HCT116 (cell line): ENCODE measurements at regions of chr15 and their contacts with region 1.

Region 1: GRCh38 chr15:51380999-51381795 is 39.7 kb downstream of the GLDN start:
- DNase-seq: peak; percentile 61
- ATAC-seq: peak; percentile 97
- H3K4me3 ChIP-seq: no peak overlapping the region
- H3K27ac ChIP-seq: no peak overlapping the region
- H3K4me1 ChIP-seq: no peaks in the 10 kb centered on the region
- H3K27me3 ChIP-seq: no peaks in the 10 kb centered on the region
- CTCF ChIP-seq: peak; percentile 89 to 98 (median 98)
- POLR2A ChIP-seq: no peak
- RAD21 ChIP-seq: peak; percentile 97

Region 2: GRCh38 chr15:51132384-51133139 is 248.6 kb before region 1 on chr15:
- CTCF ChIA-PET with region 1: interaction called, 8 read pairs
- POLR2A ChIA-PET with region 1: no interaction called
- RAD21 ChIA-PET with region 1: no interaction called
- intact Hi-C with region 1: loop called (anchors 1 kb)
- DNase-seq: peak; percentile 15
- ATAC-seq: peak; percentile 91
- H3K4me3 ChIP-seq: no peak overlapping the region
- H3K27ac ChIP-seq: no peak overlapping the region
- H3K4me1 ChIP-seq: peaks cover 0 to 11% of the 10 kb centered on the region in 2 experiments; a peak in 2 of 4 replicates
- H3K27me3 ChIP-seq: no peaks in the 10 kb centered on the region
- CTCF ChIP-seq: peak; percentile 43 to 98 (median 94); a peak in 5 of 6 replicates
- POLR2A ChIP-seq: no peak
- RAD21 ChIP-seq: peak; percentile 51; the same call in 1 of the 2 replicates

Region 3: GRCh38 chr15:51192521-51193280 is 188.5 kb before region 1 on chr15:
- CTCF ChIA-PET with region 1: interaction called, 10 read pairs
- POLR2A ChIA-PET with region 1: no interaction called
- RAD21 ChIA-PET with region 1: no interaction called
- intact Hi-C with region 1: no loop called
- DNase-seq: peak; percentile 61
- ATAC-seq: peak; percentile 99
- H3K4me3 ChIP-seq: no peak overlapping the region
- H3K27ac ChIP-seq: no peak overlapping the region
- H3K4me1 ChIP-seq: peaks cover 0 to 4% of the 10 kb centered on the region in 2 experiments; a peak in 3 of 4 replicates
- H3K27me3 ChIP-seq: no peaks in the 10 kb centered on the region; the same call in 1 of the 2 replicates
- CTCF ChIP-seq: peak; percentile 66 to 97 (median 96); a peak in 5 of 6 replicates
- POLR2A ChIP-seq: no peak
- RAD21 ChIP-seq: peak; percentile 73

Region 4: DNA sequence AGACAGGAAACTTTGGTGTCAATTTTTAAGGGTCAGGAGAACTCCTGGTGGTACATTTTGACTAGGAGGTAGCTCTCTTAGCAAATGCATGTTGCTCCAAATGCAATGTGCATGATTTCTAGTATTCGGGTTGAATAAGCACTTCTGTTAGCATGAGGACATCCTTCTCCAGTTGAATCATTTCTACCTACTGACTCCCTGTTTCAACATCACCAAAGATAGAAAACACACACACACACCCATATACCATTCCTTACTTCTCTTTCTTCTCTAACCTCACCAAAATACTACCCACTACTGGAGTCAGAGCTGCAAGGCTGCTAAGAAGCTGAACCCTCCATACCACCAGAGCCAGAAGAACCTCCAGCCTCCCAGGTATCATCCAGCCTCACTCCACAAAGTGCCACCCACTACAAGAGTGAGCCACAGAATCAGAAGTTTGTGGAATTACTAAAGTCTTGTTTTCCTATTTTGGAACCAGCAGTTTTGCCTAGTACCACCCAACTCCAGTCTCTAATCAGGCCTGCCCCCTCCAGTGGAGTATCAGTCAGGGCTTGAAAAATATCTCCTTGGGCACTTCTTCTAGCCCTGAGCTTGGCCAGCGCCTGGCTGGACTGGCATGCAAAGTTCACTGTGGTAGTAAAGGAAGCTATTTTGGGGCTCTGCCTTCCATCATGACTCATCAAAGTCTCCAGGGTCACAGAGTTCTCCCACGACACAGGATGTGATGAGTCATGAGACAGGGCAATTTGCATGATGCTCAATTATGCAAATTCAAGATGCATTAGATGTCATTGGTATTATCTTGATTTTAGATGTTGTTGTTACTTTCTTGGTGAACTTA is 153.0 kb before region 1 on chr15:
- CTCF ChIA-PET with region 1: interaction called, 14 read pairs
- POLR2A ChIA-PET with region 1: no interaction called
- RAD21 ChIA-PET with region 1: no interaction called
- intact Hi-C with region 1: loop called (anchors 5 kb)
- DNase-seq: peak; percentile 54
- ATAC-seq: peak; percentile 80
- H3K4me3 ChIP-seq: peak overlapping the region in 1 of 2 experiments; percentile 44; a peak in 2 of 4 replicates
- H3K27ac ChIP-seq: peak overlapping the region; percentile 54; the same call in 1 of the 2 replicates
- H3K4me1 ChIP-seq: peaks cover 20 to 40% of the 10 kb centered on the region in 2 experiments
- H3K27me3 ChIP-seq: no peaks in the 10 kb centered on the region
- CTCF ChIP-seq: no peak
- POLR2A ChIP-seq: no peak
- RAD21 ChIP-seq: no peak

Region 5: DNA sequence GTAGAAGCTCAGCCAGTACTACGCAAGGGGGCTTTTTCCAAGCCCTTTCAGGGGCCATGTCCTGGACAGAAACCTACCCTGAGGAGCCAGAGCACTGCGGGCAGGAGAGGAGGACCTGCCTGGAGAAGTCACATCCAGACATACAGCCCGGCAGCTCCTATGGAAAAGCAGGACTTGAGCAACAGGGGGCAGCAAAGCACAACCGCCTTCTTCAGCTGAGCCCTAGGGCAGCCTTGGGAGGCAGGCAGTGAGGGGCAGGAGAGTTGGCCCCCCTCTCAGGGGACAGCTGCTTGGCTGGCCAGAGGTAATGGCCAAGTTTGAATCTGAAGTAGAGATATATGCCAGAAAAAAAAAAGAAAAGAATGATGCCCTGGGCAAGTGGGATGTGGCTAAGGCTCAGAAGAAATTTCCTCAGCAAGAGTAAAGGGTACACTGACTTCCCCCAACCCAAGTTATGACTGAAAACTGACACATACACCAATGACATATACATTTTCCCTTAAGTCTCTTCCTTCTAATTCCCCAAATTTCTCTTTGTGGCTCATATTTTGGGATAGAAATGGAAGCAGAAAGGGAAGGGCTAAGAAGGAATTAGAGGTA is 99.7 kb before region 1 on chr15:
- CTCF ChIA-PET with region 1: interaction called, 3 read pairs
- POLR2A ChIA-PET with region 1: no interaction called
- RAD21 ChIA-PET with region 1: interaction called in 1 of 2 experiments, 3 read pairs
- intact Hi-C with region 1: loop called (anchors 1 kb)
- DNase-seq: peak; percentile 22
- ATAC-seq: peak; percentile 99
- H3K4me3 ChIP-seq: no peak overlapping the region
- H3K27ac ChIP-seq: no peak overlapping the region
- H3K4me1 ChIP-seq: no peaks in the 10 kb centered on the region
- H3K27me3 ChIP-seq: peaks cover 5% of the 10 kb centered on the region; the same call in 1 of the 2 replicates
- CTCF ChIP-seq: peak; percentile 50 to 78 (median 72); a peak in 5 of 6 replicates
- POLR2A ChIP-seq: no peak
- RAD21 ChIP-seq: peak; percentile 65

Region 6: GRCh38 chr15:51499379-51499976 is 118.3 kb after region 1 on chr15:
- CTCF ChIA-PET with region 1: no interaction called
- POLR2A ChIA-PET with region 1: no interaction called
- RAD21 ChIA-PET with region 1: no interaction called
- intact Hi-C with region 1: loop called (anchors 5 kb)
- DNase-seq: peak; percentile 50
- ATAC-seq: peak; percentile 95
- H3K4me3 ChIP-seq: no peak overlapping the region
- H3K27ac ChIP-seq: no peak overlapping the region
- H3K4me1 ChIP-seq: peaks cover 0 to 7% of the 10 kb centered on the region in 2 experiments; a peak in 2 of 4 replicates
- H3K27me3 ChIP-seq: no peaks in the 10 kb centered on the region
- CTCF ChIP-seq: peak; percentile 40 to 78 (median 73); a peak in 5 of 6 replicates
- POLR2A ChIP-seq: no peak
- RAD21 ChIP-seq: peak; percentile 74